MCF 10A (cell line): ENCODE measurements at regions of chr9 and their contacts with region 1.

Region 1: DNA sequence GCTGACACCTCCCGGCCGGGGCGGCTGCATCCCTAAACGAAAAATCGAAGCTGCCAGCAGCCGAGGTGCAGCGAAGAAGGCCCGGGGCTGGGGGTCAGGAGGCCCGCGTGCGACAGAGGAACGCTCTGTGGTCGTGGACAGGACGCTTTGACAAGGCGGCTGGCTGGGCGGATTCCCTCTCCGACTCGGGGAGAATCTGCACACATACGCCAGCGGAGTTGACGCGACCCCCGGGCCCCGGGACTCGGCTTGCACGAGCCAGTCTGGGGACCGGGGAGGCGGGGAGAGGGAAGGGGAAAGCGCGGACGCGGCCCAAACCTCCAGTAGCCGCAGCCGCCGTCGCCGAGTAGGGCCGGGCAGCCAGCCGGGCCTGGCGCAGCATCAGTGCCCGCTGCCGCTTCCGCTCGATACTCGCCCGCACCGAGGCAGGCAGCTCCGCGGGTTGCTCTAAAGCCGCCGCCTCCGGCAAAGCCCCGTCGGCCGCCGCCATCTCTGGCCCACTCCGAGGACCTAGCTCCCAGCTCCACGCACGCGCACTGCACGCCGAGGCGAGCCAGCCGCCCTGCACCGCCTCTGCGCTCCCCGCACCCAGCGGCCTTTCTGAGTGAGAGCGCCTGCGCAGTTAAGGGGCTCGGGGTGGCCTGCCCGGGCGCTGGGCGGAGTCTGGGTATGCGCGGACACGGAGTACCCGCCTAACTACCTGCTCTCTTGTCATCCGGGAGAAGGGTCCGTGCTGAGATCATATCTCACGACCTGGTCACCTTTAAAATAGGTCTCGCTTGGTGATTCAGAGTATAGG is at the start of gene XPA:
- DNase-seq: peak; percentile 96
- H3K4me3 Mint-ChIP-seq: peak within 1 kb of the TSS; percentile 86
- H3K27ac Mint-ChIP-seq: peak within 1 kb of the TSS; percentile 80
- H3K4me1 Mint-ChIP-seq: peaks cover 38% of the 10 kb centered on the region
- H3K27me3 Mint-ChIP-seq: no peaks in the 10 kb centered on the region
- CTCF ChIP-seq: no peak
- total RNA-seq, gene XPA: 11.8 and 12.3 TPM in 2 replicates

Region 2: DNA sequence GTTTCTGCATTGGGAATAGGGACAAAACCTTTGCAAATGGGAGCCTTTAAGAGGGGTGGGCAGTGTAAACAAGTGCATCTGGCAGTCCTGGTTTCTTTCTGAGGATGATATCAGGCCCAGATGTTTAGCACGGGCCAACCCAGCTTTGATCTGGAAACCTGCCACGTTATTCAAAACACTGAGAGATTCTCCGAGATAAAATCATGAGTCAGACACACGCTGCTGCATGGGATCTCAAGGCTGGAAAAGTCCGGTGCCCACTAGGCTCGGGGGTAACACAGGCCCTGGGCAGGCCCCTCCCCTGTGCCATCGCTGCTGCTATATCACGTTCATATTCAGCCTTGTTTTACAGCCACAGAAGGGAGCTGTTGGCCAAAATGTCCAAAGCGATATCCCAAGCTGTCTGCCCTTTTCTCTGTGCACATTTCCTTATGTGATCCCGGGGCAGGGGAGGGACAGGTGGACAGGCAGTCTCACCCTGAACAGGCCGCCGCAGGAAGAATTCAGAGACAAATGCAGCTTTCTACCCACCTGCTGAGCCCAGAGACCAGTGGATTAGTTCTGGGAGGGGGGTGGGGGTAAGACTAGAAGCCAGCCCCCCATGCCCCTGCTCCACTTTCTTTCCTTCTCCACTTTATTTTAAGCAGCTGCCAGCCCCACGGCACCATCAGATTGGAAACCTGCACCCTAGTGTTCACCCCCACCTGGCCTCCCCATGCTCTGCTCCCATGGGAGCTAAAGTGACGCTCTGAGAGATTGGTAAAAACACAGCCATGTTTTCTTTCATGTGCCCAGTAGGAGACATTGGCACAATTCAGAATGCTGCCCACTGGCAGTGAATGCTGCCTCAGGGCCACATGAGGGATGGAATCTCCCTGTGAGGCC is 132.5 kb before region 1 on chr9:
- CTCF ChIA-PET with region 1: no interaction called
- POLR2A ChIA-PET with region 1: no interaction called
- intact Hi-C with region 1: no loop called
- DNase-seq: peak; percentile 57
- H3K4me3 Mint-ChIP-seq: no peak overlapping the region
- H3K27ac Mint-ChIP-seq: no peak overlapping the region
- H3K4me1 Mint-ChIP-seq: peaks cover 16% of the 10 kb centered on the region
- H3K27me3 Mint-ChIP-seq: peaks cover 30% of the 10 kb centered on the region
- CTCF ChIP-seq: no peak

Region 3: DNA sequence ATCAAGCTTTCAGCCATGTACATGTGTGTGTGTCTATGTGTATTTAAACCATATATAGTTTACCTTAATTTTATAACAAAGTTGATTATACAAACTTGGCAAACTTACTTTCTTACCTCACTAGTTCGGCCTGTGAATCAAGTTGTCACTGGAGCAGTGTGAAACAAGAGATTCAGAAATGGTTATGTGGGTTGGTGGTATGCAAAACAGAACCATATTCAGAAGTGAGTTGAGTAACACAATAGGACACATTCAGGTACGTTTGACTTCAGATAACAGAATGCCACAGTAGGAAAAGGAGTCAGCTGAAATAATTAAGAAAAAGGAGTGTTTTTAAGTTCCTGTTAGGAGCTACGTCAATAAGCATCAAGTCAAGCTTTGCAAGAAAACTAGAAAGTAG is 21.3 kb before region 1 on chr9:
- CTCF ChIA-PET with region 1: interaction called, 3 read pairs
- POLR2A ChIA-PET with region 1: interaction called, 14 read pairs
- intact Hi-C with region 1: no loop called
- DNase-seq: no peak
- H3K4me3 Mint-ChIP-seq: no peak overlapping the region
- H3K27ac Mint-ChIP-seq: no peak overlapping the region
- H3K4me1 Mint-ChIP-seq: no peaks in the 10 kb centered on the region
- H3K27me3 Mint-ChIP-seq: no peaks in the 10 kb centered on the region
- CTCF ChIP-seq: no peak

Region 4: GRCh38 chr9:97908705-97909104 is 211.7 kb after region 1 on chr9:
- CTCF ChIA-PET with region 1: no interaction called
- POLR2A ChIA-PET with region 1: no interaction called
- intact Hi-C with region 1: no loop called
- DNase-seq: no peak
- H3K4me3 Mint-ChIP-seq: no peak overlapping the region
- H3K27ac Mint-ChIP-seq: no peak overlapping the region
- H3K4me1 Mint-ChIP-seq: peaks cover 20% of the 10 kb centered on the region
- H3K27me3 Mint-ChIP-seq: no peaks in the 10 kb centered on the region
- CTCF ChIP-seq: no peak